Esophagus muscularis mucosa (tissue), 4 donors: ENCODE measurements at regions of chr12 and their contacts with region 1.

Region 1: DNA sequence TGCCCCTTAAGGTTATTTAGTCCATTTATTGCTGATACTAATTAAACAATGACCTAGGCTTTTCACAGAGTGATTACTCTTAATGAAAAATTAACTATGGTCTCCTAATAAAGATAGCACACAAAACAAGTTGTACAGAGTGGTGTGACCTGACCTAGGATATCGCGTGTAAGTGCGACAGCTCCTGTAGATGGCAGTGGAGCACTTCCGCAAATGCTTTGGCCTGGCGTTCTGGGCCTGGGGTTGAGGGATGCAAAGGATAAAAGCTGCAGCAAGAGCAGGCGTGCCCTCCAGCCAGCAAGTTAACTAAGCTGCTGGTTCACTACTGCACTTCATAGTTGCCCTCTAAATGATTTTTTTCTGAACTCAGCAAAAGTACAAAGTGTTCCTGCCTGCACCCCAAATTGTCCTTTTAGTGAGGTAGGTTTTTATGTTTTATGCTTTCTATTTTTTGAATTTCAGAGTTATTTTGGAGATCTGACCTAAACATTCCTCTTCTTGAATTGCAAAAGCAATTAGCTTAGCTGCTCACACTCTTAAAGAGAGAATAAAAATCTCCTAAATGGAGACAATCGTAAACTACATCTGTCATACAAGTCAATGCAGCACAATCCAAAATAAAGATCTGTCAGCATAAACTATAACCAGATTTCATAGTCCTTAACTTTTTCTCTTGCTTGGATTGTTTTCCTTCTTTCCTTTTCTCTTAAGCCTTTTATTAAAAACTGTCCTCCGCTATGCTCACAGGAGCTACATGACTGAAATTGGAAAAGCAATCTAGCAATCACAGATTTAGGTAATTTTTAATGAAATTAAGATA is 379.6 kb downstream of the LRIG3 start:
- DNase-seq: no peak
- H3K4me3 ChIP-seq: no peak overlapping the region
- H3K27ac ChIP-seq: peak overlapping the region in 2 of 4 donors; percentile 15 to 44
- H3K4me1 ChIP-seq: peaks cover 0 to 32% (median 22%) of the 10 kb centered on the region in 4 donors
- H3K27me3 ChIP-seq: no peaks in the 10 kb centered on the region
- CTCF ChIP-seq: peak; percentile 75 to 80 (median 79)
- EP300 ChIP-seq: no peak
- POLR2A ChIP-seq: no peak

Region 2: DNA sequence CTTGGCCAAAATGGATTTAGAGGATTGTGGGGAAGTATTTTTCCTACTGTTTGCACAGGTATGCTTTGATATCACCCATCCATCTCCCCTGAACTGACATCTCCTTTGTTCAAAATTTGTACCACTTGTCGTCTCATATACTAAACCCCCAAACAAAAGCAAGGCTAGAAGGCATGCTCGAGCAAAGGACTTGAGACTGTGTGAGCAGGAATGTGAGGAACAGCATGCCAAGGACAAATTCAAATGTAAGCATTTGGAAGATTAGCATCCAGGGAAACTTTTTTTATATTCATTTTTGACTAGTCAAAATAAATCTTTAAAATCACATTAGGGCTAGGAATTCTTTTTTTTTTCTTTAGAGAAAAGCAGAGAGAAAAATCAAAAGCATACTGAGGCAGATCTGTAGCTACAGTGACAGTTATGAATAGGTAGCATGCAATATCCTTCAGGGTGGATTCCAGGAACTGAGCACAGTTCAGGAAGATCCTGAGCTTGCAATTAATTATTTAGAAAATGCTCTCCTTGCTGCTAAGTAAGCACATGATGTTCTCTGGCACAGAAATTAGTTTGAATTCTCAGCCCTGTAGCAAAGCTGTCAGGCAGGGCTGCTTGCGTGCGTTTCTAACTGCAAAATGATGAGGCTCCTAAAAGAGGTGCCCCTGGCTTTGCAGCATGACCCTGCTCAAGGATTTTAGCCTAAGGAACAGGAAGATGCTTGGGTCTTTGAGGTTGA is 52.0 kb after region 1 on chr12:
- intact Hi-C with region 1: loop called (anchors 5 kb)
- DNase-seq: no peak
- H3K4me3 ChIP-seq: no peak overlapping the region
- H3K27ac ChIP-seq: peak overlapping the region; percentile 74 to 87 (median 83)
- H3K4me1 ChIP-seq: peaks cover 0 to 59% (median 47%) of the 10 kb centered on the region in 4 donors
- H3K27me3 ChIP-seq: no peaks in the 10 kb centered on the region
- CTCF ChIP-seq: no peak
- EP300 ChIP-seq: peak; percentile 91
- POLR2A ChIP-seq: no peak

Region 3: GRCh38 chr12:59087077-59087673 is 546.5 kb after region 1 on chr12:
- intact Hi-C with region 1: loop called (anchors 1 kb)
- DNase-seq: no peak
- H3K4me3 ChIP-seq: no peak overlapping the region
- H3K27ac ChIP-seq: no peak overlapping the region
- H3K4me1 ChIP-seq: peaks cover 0 to 44% (median 41%) of the 10 kb centered on the region in 4 donors
- H3K27me3 ChIP-seq: no peaks in the 10 kb centered on the region
- CTCF ChIP-seq: peak; percentile 54 to 71 (median 59)
- EP300 ChIP-seq: no peak
- POLR2A ChIP-seq: no peak